ENCODE measurements at regions of chr16 and their contacts with region 1.

Region 1: DNA sequence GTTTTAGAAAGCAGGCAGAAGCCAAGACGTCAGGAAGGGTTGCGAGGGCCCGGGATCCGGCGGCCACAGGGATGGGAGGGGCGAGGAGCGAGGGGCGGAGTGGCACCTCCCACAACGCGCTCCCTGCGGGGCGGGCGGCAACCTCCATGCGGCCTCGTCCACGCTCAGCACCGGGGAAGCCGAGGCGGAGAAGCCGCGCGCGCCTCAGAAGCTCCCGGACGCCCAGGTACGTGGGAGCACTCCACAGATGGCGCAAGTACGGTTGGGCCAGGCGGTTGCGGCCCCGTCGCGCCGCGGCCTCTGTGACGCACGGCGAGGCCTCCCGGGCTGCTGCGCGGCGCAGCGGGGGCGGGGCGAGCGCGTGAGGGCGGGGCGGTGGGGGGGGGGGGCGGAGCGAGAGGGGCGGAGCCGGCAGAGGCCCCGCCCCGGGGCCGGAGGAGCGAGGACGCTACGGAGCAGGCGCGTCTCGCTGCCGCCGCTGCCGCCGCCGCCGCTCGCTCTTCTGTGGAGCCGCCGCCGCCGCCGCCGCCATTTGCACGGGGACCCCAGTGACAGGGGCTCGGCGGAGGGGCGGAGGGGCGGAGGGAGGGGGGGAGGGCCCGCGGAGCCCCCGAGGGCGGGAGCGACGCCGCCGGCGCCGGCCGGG is at the start of gene TENT4B:
- DNase-seq: peak; percentile 94
- ATAC-seq: peak; percentile 82
- H3K4me3 Mint-ChIP-seq: peak within 1 kb of the TSS; percentile 88
- H3K27ac Mint-ChIP-seq: peak within 1 kb of the TSS; percentile 94
- H3K4me1 Mint-ChIP-seq: peaks cover 36% of the 10 kb centered on the region
- H3K27me3 Mint-ChIP-seq: no peaks in the 10 kb centered on the region
- CTCF ChIP-seq: no peak
- total RNA-seq, gene TENT4B: 13.0 and 13.2 TPM in 2 replicates

Region 2: GRCh38 chr16:50024684-50025536 is 128.0 kb before region 1 on chr16 and contains the start of gene CNEP1R1:
- CTCF ChIA-PET with region 1: interaction called, 3 read pairs
- POLR2A ChIA-PET with region 1: interaction called, 8 read pairs
- intact Hi-C with region 1: loop called (anchors 1 kb)
- DNase-seq: peak; percentile 87
- ATAC-seq: peak; percentile 95
- H3K4me3 Mint-ChIP-seq: peak within 1 kb of the TSS; percentile 96
- H3K27ac Mint-ChIP-seq: peak within 1 kb of the TSS; percentile 83
- H3K4me1 Mint-ChIP-seq: peaks cover 19% of the 10 kb centered on the region
- H3K27me3 Mint-ChIP-seq: peaks cover 6% of the 10 kb centered on the region
- CTCF ChIP-seq: peak; percentile 82
- total RNA-seq, gene CNEP1R1: 22.1 and 31.0 TPM in 2 replicates

Region 3: GRCh38 chr16:50093607-50094539 is 59.1 kb before region 1 on chr16:
- CTCF ChIA-PET with region 1: no interaction called
- POLR2A ChIA-PET with region 1: interaction called, 3 read pairs
- intact Hi-C with region 1: loop called (anchors 5 kb)
- DNase-seq: no peak
- ATAC-seq: no peak
- H3K4me3 Mint-ChIP-seq: no peak overlapping the region
- H3K27ac Mint-ChIP-seq: no peak overlapping the region
- H3K4me1 Mint-ChIP-seq: no peaks in the 10 kb centered on the region
- H3K27me3 Mint-ChIP-seq: no peaks in the 10 kb centered on the region
- CTCF ChIP-seq: no peak

Region 4: DNA sequence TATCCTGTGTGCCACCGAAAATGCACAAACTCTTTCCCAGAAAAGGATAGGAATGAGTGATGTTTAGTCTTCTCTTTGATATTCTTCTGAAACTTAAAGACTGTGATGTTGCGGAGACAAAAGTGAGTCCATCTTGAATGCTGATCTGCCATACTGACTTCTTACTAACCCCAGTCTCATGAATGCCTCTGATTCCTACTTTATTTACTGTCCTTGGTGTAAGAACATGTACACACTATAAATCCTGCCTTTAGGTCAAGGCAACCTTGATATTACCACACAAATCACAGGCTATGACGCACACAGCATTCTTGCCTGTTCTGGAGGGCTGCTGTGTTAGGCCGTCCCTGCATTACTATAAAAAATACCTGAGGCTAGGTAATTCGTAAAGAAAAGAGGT is 23.5 kb before region 1 on chr16:
- CTCF ChIA-PET with region 1: no interaction called
- POLR2A ChIA-PET with region 1: no interaction called
- intact Hi-C with region 1: no loop called
- DNase-seq: no peak
- ATAC-seq: no peak
- H3K4me3 Mint-ChIP-seq: no peak overlapping the region
- H3K27ac Mint-ChIP-seq: no peak overlapping the region
- H3K4me1 Mint-ChIP-seq: no peaks in the 10 kb centered on the region
- H3K27me3 Mint-ChIP-seq: no peaks in the 10 kb centered on the region
- CTCF ChIP-seq: no peak

Region 5: GRCh38 chr16:50195276-50195675 is 42.3 kb after region 1 on chr16:
- CTCF ChIA-PET with region 1: no interaction called
- POLR2A ChIA-PET with region 1: no interaction called
- intact Hi-C with region 1: loop called (anchors 1 kb)
- DNase-seq: no peak
- ATAC-seq: no peak
- H3K4me3 Mint-ChIP-seq: peak overlapping the region; percentile 11
- H3K27ac Mint-ChIP-seq: no peak overlapping the region
- H3K4me1 Mint-ChIP-seq: peaks cover 66% of the 10 kb centered on the region
- H3K27me3 Mint-ChIP-seq: no peaks in the 10 kb centered on the region
- CTCF ChIP-seq: no peak

Region 6: GRCh38 chr16:50273681-50274325 is 120.9 kb after region 1 on chr16:
- CTCF ChIA-PET with region 1: interaction called, 3 read pairs
- POLR2A ChIA-PET with region 1: no interaction called
- intact Hi-C with region 1: loop called (anchors 1 kb)
- DNase-seq: no peak
- ATAC-seq: peak; percentile 82
- H3K4me3 Mint-ChIP-seq: peak overlapping the region; percentile 99
- H3K27ac Mint-ChIP-seq: peak overlapping the region; percentile 100
- H3K4me1 Mint-ChIP-seq: peaks cover 92% of the 10 kb centered on the region
- H3K27me3 Mint-ChIP-seq: no peaks in the 10 kb centered on the region
- CTCF ChIP-seq: no peak

Region 7: GRCh38 chr16:50548125-50548908 is 395.4 kb after region 1 on chr16 and contains the start of gene NKD1:
- CTCF ChIA-PET with region 1: no interaction called
- POLR2A ChIA-PET with region 1: no interaction called
- intact Hi-C with region 1: loop called (anchors 2 kb)
- DNase-seq: peak; percentile 72
- ATAC-seq: peak; percentile 88
- H3K4me3 Mint-ChIP-seq: peak within 1 kb of the TSS; percentile 91
- H3K27ac Mint-ChIP-seq: peak within 1 kb of the TSS; percentile 70
- H3K4me1 Mint-ChIP-seq: peaks cover 7% of the 10 kb centered on the region
- H3K27me3 Mint-ChIP-seq: peaks cover 10% of the 10 kb centered on the region
- CTCF ChIP-seq: no peak
- total RNA-seq, gene NKD1: 0.49 and 1.5 TPM in 2 replicates

Region 8: DNA sequence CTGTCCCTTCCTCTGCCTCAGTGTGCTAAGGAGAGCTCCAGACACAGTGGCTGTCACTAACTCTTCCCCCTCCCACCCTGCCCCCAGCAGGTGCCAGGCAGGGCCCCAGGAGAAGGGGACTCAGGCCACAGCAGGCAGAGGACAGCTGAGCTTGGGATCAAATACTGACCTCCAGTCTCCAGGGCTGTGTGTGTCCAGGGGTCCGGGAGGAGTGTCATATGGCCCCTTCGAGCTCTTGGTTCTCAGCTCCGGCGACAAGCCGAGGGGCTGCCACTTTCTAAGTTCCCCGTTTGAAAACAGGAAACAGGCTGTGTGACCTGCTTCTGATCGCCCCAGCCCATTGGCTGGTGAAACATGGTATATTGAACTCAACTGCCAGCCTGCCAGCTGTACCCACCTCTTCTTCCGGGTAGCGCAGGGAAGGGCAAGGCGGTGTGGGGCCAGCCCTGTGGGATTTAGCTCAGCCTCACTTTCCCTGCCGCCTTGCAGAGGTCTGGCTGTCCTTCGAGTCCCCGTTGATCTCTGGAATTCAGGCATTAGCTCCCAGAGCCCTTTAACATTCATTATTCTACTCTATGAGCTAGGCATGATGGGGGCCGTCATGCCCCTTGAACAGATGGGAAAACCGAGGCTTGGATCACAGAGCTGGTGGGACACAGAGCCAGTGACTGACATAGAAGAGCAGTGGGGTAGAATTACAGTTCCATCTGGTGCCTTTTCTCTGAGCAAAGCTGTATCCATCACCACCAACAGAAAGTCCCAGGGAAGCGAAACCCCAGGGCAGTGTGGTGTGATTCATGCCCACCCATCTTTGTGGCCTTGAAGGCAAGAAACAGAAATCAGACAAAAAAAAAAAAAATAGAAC is 528.3 kb after region 1 on chr16 and contains the start of gene SNX20:
- CTCF ChIA-PET with region 1: no interaction called
- POLR2A ChIA-PET with region 1: interaction called, 4 read pairs
- intact Hi-C with region 1: loop called (anchors 5 kb)
- DNase-seq: peak; percentile 49
- ATAC-seq: peak; percentile 78
- H3K4me3 Mint-ChIP-seq: peak within 1 kb of the TSS; percentile 86
- H3K27ac Mint-ChIP-seq: peak within 1 kb of the TSS; percentile 93
- H3K4me1 Mint-ChIP-seq: peaks cover 79% of the 10 kb centered on the region
- H3K27me3 Mint-ChIP-seq: no peaks in the 10 kb centered on the region
- CTCF ChIP-seq: no peak
- total RNA-seq, gene SNX20: 33.1 and 34.5 TPM in 2 replicates